Vagina (tissue), 2 donors: ENCODE measurements at regions of chr12 and their contacts with region 1.

Region 1: GRCh38 chr12:12032851-12033588 is 37.7 kb upstream of the BCL2L14 start:
- DNase-seq: no peak
- H3K4me3 ChIP-seq: peak overlapping the region; percentile 38 to 39
- H3K27ac ChIP-seq: peak overlapping the region; percentile 67
- H3K4me1 ChIP-seq: peaks cover 14% of the 10 kb centered on the region
- H3K27me3 ChIP-seq: no peaks in the 10 kb centered on the region
- CTCF ChIP-seq: peak; percentile 92 to 95 (median 92)
- POLR2A ChIP-seq: no peak

Region 2: GRCh38 chr12:11553871-11554533 is 479.0 kb before region 1 on chr12:
- intact Hi-C with region 1: loop called (anchors 10 kb)
- DNase-seq: no peak
- H3K4me3 ChIP-seq: no peak overlapping the region
- H3K27ac ChIP-seq: no peak overlapping the region
- H3K4me1 ChIP-seq: peaks cover 15% of the 10 kb centered on the region
- H3K27me3 ChIP-seq: no peaks in the 10 kb centered on the region
- CTCF ChIP-seq: peak in 1 of 3 experiments; percentile 50
- POLR2A ChIP-seq: no peak

Region 3: GRCh38 chr12:11581179-11581755 is 451.8 kb before region 1 on chr12:
- intact Hi-C with region 1: loop called (anchors 5 kb)
- DNase-seq: no peak
- H3K4me3 ChIP-seq: no peak overlapping the region
- H3K27ac ChIP-seq: no peak overlapping the region
- H3K4me1 ChIP-seq: peaks cover 10% of the 10 kb centered on the region
- H3K27me3 ChIP-seq: no peaks in the 10 kb centered on the region
- CTCF ChIP-seq: peak; percentile 52 to 73 (median 63)
- POLR2A ChIP-seq: no peak

Region 4: DNA sequence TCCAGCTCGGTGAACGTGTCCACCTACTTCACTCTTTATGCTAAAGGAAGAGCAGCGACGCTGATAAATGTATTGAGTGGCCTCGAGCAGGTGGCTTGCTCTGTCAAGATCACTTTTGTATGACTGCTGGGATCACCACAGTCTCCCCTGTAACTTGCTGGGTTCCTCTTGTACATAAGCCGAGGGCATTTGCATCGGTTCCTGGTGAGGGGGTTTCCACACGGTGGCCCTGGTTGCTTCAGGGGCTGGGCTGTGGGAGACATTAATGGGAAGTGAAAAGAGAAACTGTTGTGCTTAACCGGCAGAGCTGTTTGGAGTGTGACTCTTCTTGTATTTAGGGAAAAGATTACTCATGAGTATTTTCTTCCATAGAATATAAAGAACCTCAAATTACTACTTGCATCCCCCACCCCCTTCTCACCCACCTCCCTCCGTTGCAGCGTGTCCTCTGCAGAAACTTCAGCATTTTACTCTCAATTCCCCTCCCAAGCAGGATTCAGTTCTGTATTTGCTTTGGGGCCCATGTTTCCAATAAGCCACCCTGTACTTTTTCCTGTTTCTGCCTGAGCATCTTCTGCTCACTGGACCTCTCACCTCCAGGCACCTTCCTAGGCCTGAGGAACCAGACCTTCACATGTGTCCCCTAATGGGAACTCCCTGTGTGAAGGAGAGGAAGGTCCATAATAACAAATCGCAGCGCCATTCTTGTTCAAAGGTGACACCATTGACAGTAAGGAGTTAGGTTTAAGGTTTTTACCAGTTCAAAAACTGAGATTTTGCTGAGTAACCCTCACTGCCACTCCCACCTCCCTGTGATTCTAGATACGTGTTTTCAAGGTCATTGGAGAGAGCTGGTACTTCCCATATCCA is 196.5 kb before region 1 on chr12:
- intact Hi-C with region 1: no loop called
- DNase-seq: no peak
- H3K4me3 ChIP-seq: no peak overlapping the region
- H3K27ac ChIP-seq: no peak overlapping the region
- H3K4me1 ChIP-seq: peaks cover 42% of the 10 kb centered on the region
- H3K27me3 ChIP-seq: no peaks in the 10 kb centered on the region
- CTCF ChIP-seq: no peak
- POLR2A ChIP-seq: no peak

Region 5: GRCh38 chr12:12171991-12172521 is 139.0 kb after region 1 on chr12:
- intact Hi-C with region 1: no loop called
- DNase-seq: no peak
- H3K4me3 ChIP-seq: no peak overlapping the region
- H3K27ac ChIP-seq: no peak overlapping the region
- H3K4me1 ChIP-seq: peaks cover 24% of the 10 kb centered on the region
- H3K27me3 ChIP-seq: no peaks in the 10 kb centered on the region
- CTCF ChIP-seq: no peak
- POLR2A ChIP-seq: no peak